ENCODE measurements at regions of chr11 and their contacts with region 1.

Region 1: DNA sequence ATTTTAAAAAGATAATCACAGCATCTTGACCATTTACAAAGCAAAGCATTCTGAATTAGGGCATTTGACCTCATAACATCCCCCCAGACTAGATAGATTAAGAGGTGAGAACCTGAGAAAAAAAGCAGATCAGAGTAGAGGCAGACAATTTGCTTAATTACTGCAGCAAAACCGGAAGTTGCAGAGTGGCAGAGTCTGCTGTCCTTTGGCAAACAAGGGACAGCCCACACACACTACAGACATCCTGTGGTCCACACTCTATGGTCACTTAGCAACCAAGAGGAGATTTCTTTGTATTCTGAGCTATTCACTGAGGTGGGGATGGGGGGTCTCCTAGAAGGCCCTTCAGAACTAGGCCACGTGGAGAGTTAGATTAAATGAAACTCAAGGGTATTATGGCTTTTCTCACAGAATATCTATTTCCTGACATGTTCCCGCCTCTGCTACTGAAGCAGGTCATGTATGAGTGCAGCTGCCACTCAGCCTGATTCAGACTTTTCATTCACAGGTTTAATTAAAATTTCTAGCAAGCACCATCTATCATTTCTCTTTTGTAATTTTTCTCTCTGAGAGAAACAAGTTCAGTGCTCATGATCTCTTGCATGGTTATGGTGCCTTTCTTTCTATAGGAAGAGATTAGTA is 48.5 kb downstream of the SVIP start:
- DNase-seq: no peak
- H3K4me3 ChIP-seq: no peak overlapping the region
- H3K27ac ChIP-seq: peak overlapping the region in 10 of 59 donors; percentile 5 to 92 (median 22)
- H3K27me3 ChIP-seq: no peaks in the 10 kb centered on the region
- CTCF ChIP-seq: no peak

Region 2: DNA sequence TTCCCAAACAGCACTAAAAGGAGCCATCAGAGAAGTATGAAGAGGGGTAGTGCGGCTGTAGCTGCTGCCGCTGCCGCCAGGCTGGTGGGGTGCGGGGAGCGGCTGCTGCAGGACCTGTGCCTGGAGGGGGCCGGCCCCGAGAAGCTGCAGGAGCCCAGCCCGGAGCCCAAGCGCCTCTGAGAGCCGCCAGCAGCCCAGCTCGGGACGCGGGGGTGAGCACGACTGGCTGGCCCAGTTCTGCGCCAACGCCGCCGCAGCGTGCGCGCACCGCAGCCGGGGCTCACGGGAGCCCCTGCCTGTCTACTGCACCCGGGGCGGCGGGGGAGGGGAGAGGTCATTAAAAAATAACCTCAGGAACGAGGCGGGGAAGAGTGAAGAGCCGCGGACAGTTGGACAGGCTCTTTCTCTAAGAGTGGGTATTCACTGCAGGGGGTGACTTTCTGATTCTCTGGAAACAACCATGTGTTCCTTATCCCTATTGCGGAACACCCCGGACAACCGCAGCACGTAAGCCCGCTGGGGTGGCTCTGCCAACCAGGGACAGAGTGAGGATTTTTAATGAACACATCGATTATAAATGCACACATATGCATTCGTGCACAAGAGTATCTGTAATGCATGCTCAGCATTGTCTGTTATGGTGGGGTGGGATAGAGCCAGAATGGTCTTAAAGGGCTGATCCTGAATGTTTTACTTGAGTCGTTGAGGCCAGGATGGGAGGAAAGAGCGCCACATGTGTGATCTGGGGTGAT is 114.2 kb before region 1 on chr11:
- intact Hi-C with region 1: loop called (anchors 5 kb)
- DNase-seq: peak in 9 of 10 donors; percentile 5 to 79 (median 66)
- H3K4me3 ChIP-seq: peak overlapping the region; percentile 41 to 81 (median 65)
- H3K27ac ChIP-seq: peak overlapping the region in 34 of 59 donors; percentile 6 to 71 (median 51)
- H3K27me3 ChIP-seq: no peaks in the 10 kb centered on the region
- CTCF ChIP-seq: peak in 5 of 56 donors; percentile 7 to 17 (median 9)

Region 3: DNA sequence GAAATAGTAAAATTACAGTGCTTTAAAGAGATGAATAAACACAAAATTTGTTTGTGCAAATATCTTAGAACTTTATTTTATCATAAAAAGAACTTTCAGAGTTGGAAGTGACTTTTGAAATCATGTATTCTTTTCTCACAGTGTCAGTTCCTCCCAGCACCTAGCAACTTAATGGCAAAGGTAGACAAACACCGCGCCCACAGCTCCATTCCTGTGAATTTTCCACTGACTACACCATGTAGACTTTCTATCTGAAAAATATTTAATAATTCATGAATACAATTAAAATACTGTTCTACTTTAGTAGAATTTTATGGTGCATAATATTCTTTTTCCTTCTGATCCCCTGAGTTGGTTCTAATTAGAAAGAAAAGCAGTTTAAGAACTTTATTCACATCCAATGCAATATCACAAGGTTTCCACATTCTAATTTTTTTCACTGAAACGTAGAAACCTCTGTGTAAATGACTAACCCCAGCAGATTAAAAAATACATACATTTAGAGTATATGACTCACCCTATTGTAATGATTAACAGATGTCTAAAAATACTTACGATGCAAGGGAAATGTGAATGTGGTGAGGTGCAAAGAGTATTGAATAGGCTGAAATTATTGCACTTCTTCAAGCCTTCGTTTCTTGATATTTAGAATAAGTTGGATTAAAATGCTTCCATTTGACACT is 297.4 kb after region 1 on chr11:
- intact Hi-C with region 1: no loop called
- DNase-seq: no peak
- H3K4me3 ChIP-seq: no peak overlapping the region
- H3K27ac ChIP-seq: no peak overlapping the region
- H3K27me3 ChIP-seq: no peaks in the 10 kb centered on the region
- CTCF ChIP-seq: no peak

Measured in dorsolateral prefrontal cortex (tissue), 120 donors.